Activated CD4-positive, alpha-beta T cell treated with anti-CD3 and anti-CD28 coated beads for 36 hours (primary cell): ENCODE measurements at regions of chr10 and their contacts with region 1.

Region 1: GRCh38 chr10:96395931-96396877 is 37.4 kb upstream of the OPALIN start:
- DNase-seq: peak; percentile 82
- ATAC-seq: peak; percentile 85
- H3K4me3 Mint-ChIP-seq: peak overlapping the region; percentile 18
- H3K27ac Mint-ChIP-seq: no peak overlapping the region
- H3K4me1 Mint-ChIP-seq: no peaks in the 10 kb centered on the region
- H3K27me3 Mint-ChIP-seq: peaks cover 4% of the 10 kb centered on the region

Region 2: DNA sequence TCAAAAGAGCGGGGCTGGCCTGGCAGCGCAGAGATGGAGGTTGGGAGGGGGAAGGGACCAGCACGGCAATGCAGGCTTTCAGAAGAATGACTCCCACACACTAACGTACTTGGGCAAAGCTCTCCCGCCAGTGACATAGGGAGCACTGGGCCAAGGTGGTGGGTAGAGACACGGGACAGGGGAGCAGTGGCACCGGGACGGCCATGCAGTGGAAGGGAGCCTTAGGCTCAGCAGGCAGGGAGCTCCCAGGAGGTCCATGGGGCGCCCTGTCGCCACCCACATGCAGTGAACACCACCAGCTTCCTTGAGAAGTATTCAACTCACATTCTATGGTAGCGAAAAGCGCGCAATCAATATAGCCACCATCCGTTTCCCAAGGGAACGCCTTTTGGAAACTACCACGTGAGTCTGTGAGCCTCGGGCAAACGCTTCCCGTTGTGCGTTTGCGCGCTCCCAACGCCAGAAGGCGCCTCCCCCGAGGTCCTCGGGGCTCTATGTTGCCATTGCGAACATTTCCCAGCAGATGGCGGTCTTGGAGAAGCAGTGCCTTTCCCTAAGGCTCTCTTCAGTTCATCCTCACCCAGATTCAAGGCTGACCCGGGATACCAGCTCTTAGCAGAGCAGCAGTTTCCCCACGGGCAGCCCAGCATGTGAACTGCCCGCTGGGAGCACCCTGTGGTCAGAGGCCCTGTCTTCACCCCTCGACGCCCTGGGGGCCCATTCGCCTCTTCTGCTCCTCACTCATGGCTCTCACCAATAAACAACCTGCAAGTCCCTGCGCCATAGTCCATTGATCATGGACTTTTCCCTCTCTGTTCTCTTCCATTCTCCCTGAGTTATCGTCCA is 21.0 kb before region 1 on chr10:
- CTCF ChIA-PET with region 1: interaction called, 7 read pairs
- POLR2A ChIA-PET with region 1: no interaction called
- intact Hi-C with region 1: loop called in 1 of 2 experiments (anchors 1 kb)
- DNase-seq: peak; percentile 88
- ATAC-seq: peak; percentile 93
- H3K4me3 Mint-ChIP-seq: peak overlapping the region; percentile 65
- H3K27ac Mint-ChIP-seq: no peak overlapping the region
- H3K4me1 Mint-ChIP-seq: peaks cover 9% of the 10 kb centered on the region
- H3K27me3 Mint-ChIP-seq: peaks cover 4% of the 10 kb centered on the region

Region 3: DNA sequence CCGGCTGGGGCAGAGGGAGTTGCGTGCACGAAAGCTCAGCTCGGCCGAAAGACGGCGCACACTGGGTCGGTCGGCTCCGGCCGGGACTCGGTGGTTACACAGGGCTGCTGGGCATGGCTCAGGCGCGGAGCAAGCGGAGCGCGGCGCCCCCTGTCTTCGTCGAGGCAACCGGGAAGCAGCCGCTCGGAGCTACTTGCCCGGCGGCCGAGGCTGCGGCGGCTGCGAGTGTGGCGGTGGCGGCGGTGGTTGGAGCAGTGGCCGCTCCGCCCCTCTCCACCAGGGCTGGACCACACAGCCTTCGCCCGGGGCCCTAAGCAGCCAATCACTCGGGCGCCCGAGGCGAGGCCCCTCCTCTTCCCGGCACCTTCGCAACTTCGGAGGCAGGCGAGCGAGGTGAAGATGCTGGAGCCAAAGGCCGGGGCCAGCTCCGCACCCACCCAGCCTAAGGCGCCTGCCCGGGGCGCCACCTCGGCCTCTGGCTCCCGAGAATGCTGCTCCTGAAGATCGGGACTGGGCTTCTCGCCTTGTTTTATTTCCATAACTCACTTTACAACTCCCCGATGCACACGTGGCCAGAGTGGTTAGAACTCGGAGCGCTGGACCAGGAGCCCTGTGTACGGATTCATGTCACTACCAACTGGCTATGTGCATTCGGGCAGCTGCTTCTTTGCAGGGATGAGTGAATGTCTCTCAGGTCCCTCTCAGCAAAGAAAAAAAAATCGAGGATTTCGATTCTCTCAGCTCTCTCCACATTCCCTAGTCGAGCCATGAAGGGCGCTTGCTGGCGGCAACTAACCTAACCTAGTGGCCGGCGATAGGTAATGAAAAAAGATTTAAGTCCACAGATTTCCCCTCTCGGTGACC is 117.7 kb after region 1 on chr10 and contains the start of gene TLL2:
- CTCF ChIA-PET with region 1: interaction called, 3 read pairs
- POLR2A ChIA-PET with region 1: no interaction called
- intact Hi-C with region 1: loop called (anchors 1 kb)
- DNase-seq: peak; percentile 80
- ATAC-seq: peak; percentile 87
- H3K4me3 Mint-ChIP-seq: peak within 1 kb of the TSS; percentile 57
- H3K27ac Mint-ChIP-seq: no peak within 1 kb of the TSS
- H3K4me1 Mint-ChIP-seq: peaks cover 10% of the 10 kb centered on the region
- H3K27me3 Mint-ChIP-seq: peaks cover 43% of the 10 kb centered on the region
- total RNA-seq, gene TLL2: 0.02 TPM in 1 of 2 experiments, not detected in the other

Region 4: DNA sequence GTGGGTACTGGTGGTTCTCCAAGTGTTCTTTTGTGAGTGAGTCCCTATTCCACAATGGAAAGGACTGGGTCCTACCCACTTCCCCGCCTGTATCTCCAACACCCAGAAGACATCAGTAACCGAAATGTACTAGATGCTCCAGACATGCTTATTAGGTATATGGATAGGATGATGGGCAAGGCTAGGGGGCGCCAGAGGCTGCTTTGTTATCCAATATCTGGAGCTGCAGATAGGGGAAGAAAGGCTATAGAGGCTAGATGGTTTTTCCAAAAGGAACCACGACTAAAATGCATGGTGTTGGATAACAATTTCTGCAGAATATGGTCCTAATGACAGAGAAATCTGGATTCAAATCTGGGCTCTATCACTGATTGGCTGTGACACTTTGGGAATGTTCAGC is 246.8 kb after region 1 on chr10:
- CTCF ChIA-PET with region 1: interaction called, 4 read pairs
- POLR2A ChIA-PET with region 1: no interaction called
- intact Hi-C with region 1: loop called in 1 of 2 experiments (anchors 2 kb)
- DNase-seq: peak; percentile 88
- ATAC-seq: peak; percentile 80
- H3K4me3 Mint-ChIP-seq: no peak overlapping the region
- H3K27ac Mint-ChIP-seq: no peak overlapping the region
- H3K4me1 Mint-ChIP-seq: peaks cover 22% of the 10 kb centered on the region
- H3K27me3 Mint-ChIP-seq: no peaks in the 10 kb centered on the region

Region 5: DNA sequence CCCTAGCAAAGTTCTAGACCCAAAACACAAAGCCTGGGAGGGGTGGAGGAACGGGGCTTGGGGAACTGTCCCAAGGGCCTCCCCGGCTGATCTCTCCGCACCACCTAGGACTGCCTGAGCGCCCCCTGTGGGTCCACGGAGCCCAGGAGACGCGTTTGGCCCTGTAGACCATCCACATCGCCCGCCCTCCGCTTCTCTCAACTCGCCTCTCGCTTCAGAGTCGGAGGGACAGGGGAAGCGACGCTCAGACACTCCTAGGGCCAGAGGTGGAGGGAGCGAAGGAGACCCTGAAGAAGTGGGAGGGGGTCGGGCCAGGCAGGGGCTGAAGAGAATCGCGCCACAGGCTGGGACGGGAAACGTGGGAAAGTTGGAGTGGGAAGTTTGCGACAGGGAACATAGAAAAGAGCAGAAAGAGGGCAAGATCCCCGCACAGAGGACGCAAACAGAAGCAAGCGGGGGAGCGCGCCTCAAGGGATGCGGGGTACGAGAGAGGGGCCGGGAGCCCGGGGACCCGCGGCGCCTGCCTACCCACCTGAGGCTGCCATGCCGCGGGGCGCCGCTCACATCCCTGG is 323.7 kb after region 1 on chr10:
- CTCF ChIA-PET with region 1: no interaction called
- POLR2A ChIA-PET with region 1: no interaction called
- intact Hi-C with region 1: loop called in 1 of 2 experiments (anchors 10 kb)
- DNase-seq: peak; percentile 77
- ATAC-seq: peak; percentile 68
- H3K4me3 Mint-ChIP-seq: peak overlapping the region; percentile 93
- H3K27ac Mint-ChIP-seq: peak overlapping the region; percentile 84
- H3K4me1 Mint-ChIP-seq: peaks cover 12% of the 10 kb centered on the region
- H3K27me3 Mint-ChIP-seq: peaks cover 2% of the 10 kb centered on the region

Region 6: DNA sequence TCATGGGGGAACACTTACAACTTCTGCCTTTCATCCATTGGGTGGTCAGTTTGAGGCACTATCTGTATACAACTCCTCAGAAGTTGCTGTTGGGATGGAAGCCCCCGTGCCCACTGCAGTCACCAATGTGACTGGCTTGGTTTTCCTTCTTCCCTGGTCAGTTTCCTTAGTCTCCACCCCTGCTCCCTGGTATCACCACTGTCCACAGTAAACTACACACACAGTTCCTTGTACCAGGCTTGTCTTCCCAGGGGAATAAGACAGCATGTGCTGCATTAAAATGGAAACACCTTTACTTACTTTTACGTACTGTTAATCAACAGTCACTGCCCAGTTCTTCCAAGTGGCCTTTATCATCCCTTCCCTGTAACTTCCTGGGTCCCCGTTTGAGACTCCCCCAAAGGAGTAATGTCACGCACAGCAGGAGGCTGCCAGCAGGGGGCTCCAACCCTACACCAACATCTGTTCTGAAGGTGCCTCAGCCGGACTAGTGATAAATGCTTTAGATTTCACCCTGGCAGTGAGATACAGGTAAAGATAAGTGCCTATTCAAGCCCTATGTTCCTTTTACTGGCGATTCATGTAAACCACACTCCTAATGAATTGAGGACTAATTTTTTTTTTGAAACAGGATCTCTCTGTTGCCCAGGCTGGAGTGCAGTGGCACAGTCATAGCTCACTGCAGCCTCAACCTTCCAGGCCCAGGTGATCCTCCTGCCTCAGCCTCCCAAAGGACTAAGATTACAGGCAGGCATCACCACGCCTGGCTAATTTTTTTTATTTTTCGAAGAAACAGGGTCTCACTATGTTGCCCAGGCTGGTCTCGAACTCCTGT is 369.4 kb after region 1 on chr10:
- CTCF ChIA-PET with region 1: no interaction called
- POLR2A ChIA-PET with region 1: no interaction called
- intact Hi-C with region 1: loop called in 1 of 2 experiments (anchors 1 kb)
- DNase-seq: peak; percentile 88
- ATAC-seq: peak; percentile 96
- H3K4me3 Mint-ChIP-seq: no peak overlapping the region
- H3K27ac Mint-ChIP-seq: no peak overlapping the region
- H3K4me1 Mint-ChIP-seq: no peaks in the 10 kb centered on the region
- H3K27me3 Mint-ChIP-seq: no peaks in the 10 kb centered on the region

Region 7: GRCh38 chr10:97025613-97026242 is 629.5 kb after region 1 on chr10:
- CTCF ChIA-PET with region 1: interaction called, 7 read pairs
- POLR2A ChIA-PET with region 1: no interaction called
- intact Hi-C with region 1: loop called (anchors 2 kb)
- DNase-seq: peak; percentile 81
- ATAC-seq: peak; percentile 89
- H3K4me3 Mint-ChIP-seq: no peak overlapping the region
- H3K27ac Mint-ChIP-seq: no peak overlapping the region
- H3K4me1 Mint-ChIP-seq: no peaks in the 10 kb centered on the region
- H3K27me3 Mint-ChIP-seq: no peaks in the 10 kb centered on the region